Panc1 (cell line): ENCODE measurements at regions of chr11 and their contacts with region 1.

Region 1: DNA sequence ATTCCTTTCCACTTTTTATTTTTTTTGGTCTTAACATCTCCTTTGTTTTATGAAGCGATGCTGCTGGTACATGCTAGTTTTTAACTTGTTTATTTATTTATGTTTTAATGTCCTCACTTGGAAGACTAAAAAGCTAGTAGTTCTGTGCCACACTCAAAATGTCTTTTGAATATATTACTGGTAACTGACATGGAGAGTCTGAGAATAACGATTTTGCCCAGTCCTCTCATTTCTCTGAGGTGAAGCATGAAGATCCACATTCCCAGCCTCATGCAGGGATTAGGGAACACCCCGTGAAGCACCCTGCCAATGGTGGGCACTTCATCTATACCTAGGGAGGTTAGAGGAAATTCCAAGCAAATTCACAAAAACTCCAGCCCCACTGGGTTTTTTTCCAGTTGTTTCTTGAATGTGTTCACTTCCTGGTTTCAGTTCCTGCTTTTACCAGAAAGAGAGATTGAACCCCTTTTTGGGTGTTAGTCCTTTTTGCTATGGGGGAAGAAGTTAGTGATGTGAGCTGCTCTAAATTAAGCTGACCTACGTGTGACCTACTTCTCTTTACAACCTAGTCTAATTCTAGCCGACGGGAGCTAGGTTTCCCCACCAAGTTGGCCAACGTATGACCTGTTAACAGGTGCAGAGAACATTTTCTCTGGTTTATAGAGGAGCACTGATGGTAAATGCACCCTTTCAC is 106.1 kb downstream of the SLC1A2 start:
- DNase-seq: no peak
- ATAC-seq: no peak
- H3K4me3 ChIP-seq: no peak overlapping the region
- H3K27ac ChIP-seq: no peak overlapping the region
- H3K4me1 ChIP-seq: no peaks in the 10 kb centered on the region
- H3K27me3 ChIP-seq: no peaks in the 10 kb centered on the region
- CTCF ChIP-seq: no peak

Region 2: GRCh38 chr11:34960277-34960676 is 352.9 kb before region 1 on chr11:
- CTCF ChIA-PET with region 1: no interaction called
- POLR2A ChIA-PET with region 1: no interaction called
- in situ Hi-C with region 1: no loop called
- intact Hi-C with region 1: no loop called
- DNase-seq: no peak
- ATAC-seq: no peak
- H3K4me3 ChIP-seq: no peak overlapping the region
- H3K27ac ChIP-seq: peak overlapping the region; percentile 71; the same call in 1 of the 2 replicates
- H3K4me1 ChIP-seq: peaks cover 6% of the 10 kb centered on the region
- H3K27me3 ChIP-seq: no peaks in the 10 kb centered on the region
- CTCF ChIP-seq: no peak

Region 3: DNA sequence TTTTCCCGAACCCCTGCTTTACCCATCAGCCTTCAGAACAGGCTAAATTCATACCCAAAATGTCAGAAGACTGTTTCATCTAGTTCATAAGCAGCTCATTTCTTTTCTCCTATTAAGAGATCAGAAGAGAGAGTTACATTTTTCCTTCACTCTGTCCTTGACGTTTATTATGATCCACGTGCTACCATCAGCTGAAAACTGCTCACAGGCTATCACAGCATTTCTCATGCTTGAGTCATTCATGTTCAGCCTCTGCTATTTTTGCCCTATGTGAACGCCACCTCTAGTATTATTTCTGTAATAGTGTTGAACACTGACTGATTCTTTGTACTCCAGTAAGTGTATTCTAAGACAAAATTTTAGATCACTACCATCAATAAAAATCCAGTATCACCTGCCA is 54.3 kb after region 1 on chr11:
- CTCF ChIA-PET with region 1: interaction called, 10 read pairs
- POLR2A ChIA-PET with region 1: no interaction called
- in situ Hi-C with region 1: no loop called
- intact Hi-C with region 1: no loop called
- DNase-seq: no peak
- ATAC-seq: no peak
- H3K4me3 ChIP-seq: no peak overlapping the region
- H3K27ac ChIP-seq: no peak overlapping the region
- H3K4me1 ChIP-seq: no peaks in the 10 kb centered on the region; the same call in 1 of the 2 replicates
- H3K27me3 ChIP-seq: no peaks in the 10 kb centered on the region
- CTCF ChIP-seq: no peak

Region 4: GRCh38 chr11:35511666-35512065 is 198.5 kb after region 1 on chr11:
- CTCF ChIA-PET with region 1: no interaction called
- POLR2A ChIA-PET with region 1: no interaction called
- in situ Hi-C with region 1: no loop called
- intact Hi-C with region 1: no loop called
- DNase-seq: no peak
- ATAC-seq: no peak
- H3K4me3 ChIP-seq: no peak overlapping the region
- H3K27ac ChIP-seq: no peak overlapping the region
- H3K4me1 ChIP-seq: no peaks in the 10 kb centered on the region
- H3K27me3 ChIP-seq: peaks cover 29% of the 10 kb centered on the region
- CTCF ChIP-seq: no peak